B cell (primary cell): ENCODE measurements at regions of chr12 and their contacts with region 1.

Region 1: DNA sequence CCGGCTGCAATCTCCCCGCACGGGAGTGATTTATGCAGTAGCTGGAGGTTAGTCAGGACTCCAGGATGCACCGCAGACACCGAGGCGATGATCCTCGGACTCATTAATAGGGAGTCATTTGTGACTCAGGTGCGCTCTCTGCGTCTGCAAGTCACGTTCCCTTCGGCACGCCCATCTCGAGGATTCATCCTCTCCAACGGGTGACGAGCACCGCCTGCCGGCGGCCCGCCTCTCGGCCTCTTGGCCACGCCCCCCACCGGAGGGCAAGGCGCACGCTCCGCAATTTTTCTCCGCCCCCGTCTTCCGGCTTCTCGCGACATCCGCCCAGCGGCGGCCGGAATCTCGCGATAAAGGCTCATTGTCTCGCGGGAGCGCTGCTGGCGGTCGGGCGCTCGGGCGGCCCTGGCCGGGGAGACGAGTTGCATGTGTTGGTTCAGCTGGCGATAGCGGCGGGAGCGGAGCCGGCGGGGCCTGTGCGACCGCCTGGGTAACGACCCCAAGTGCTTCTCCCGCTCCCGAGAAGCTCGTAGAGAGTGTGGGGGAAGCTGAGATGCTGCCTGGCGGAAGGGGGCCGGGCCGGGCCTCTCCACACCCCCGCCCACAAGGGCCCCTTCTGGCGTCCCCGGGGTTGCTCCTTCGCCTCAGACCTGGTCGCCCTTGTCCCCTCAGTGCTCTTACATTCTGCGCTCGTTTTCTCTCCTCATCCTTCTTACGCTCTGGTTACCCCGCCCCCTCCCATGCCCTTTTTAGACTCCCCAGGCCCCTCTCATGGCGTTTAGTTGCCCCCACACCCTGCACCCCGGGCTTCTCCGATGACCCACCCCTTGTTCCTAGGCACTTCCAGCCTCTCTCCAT is at the start of gene DENR:
- DNase-seq: peak; percentile 99
- ATAC-seq: peak; percentile 94
- H3K4me3 ChIP-seq: peak within 1 kb of the TSS; percentile 60 to 83 (median 78)
- H3K4me3 Mint-ChIP-seq: peak within 1 kb of the TSS; percentile 96
- H3K27ac ChIP-seq: peak within 1 kb of the TSS; percentile 75 to 90
- H3K27ac Mint-ChIP-seq: peak within 1 kb of the TSS; percentile 94
- H3K4me1 ChIP-seq: peaks cover 13 to 23% of the 10 kb centered on the region in 2 donors
- H3K4me1 Mint-ChIP-seq: peaks cover 48% of the 10 kb centered on the region
- H3K27me3 ChIP-seq: no peaks in the 10 kb centered on the region
- H3K27me3 Mint-ChIP-seq: no peaks in the 10 kb centered on the region
- CTCF ChIP-seq: peak; percentile 80
- total RNA-seq, gene DENR: 54.5 and 59.0 TPM in 2 replicates

Region 2: GRCh38 chr12:122336015-122336946 is 416.4 kb before region 1 on chr12:
- CTCF ChIA-PET with region 1: no interaction called
- POLR2A ChIA-PET with region 1: no interaction called
- intact Hi-C with region 1: loop called (anchors 5 kb)
- DNase-seq: peak; percentile 50
- ATAC-seq: no peak
- H3K4me3 ChIP-seq: no peak overlapping the region
- H3K4me3 Mint-ChIP-seq: no peak overlapping the region
- H3K27ac ChIP-seq: peak overlapping the region in 1 of 2 donors; percentile 19
- H3K27ac Mint-ChIP-seq: no peak overlapping the region
- H3K4me1 ChIP-seq: no peaks in the 10 kb centered on the region
- H3K4me1 Mint-ChIP-seq: no peaks in the 10 kb centered on the region
- H3K27me3 ChIP-seq: no peaks in the 10 kb centered on the region
- H3K27me3 Mint-ChIP-seq: no peaks in the 10 kb centered on the region
- CTCF ChIP-seq: peak; percentile 78

Region 3: GRCh38 chr12:122399592-122400373 is 352.9 kb before region 1 on chr12:
- CTCF ChIA-PET with region 1: interaction called, 6 read pairs
- POLR2A ChIA-PET with region 1: no interaction called
- intact Hi-C with region 1: loop called (anchors 1 kb)
- DNase-seq: peak; percentile 77
- ATAC-seq: peak; percentile 66
- H3K4me3 ChIP-seq: peak overlapping the region in 1 of 5 experiments; percentile 6
- H3K4me3 Mint-ChIP-seq: peak overlapping the region; percentile 75
- H3K27ac ChIP-seq: peak overlapping the region in 1 of 2 donors; percentile 38
- H3K27ac Mint-ChIP-seq: peak overlapping the region; percentile 73
- H3K4me1 ChIP-seq: peaks cover 23 to 31% of the 10 kb centered on the region in 2 donors
- H3K4me1 Mint-ChIP-seq: peaks cover 31% of the 10 kb centered on the region
- H3K27me3 ChIP-seq: no peaks in the 10 kb centered on the region
- H3K27me3 Mint-ChIP-seq: no peaks in the 10 kb centered on the region
- CTCF ChIP-seq: peak; percentile 87

Region 4: GRCh38 chr12:122526683-122527477 is 225.8 kb before region 1 on chr12 and contains the starts of genes KNTC1 and RSRC2:
- CTCF ChIA-PET with region 1: interaction called, 3 read pairs
- POLR2A ChIA-PET with region 1: no interaction called
- intact Hi-C with region 1: loop called (anchors 1 kb)
- DNase-seq: peak; percentile 99
- ATAC-seq: peak; percentile 92
- H3K4me3 ChIP-seq: peak within 1 kb of the TSS; percentile 69 to 99 (median 97)
- H3K4me3 Mint-ChIP-seq: no peak within 1 kb of the TSS
- H3K27ac ChIP-seq: peak within 1 kb of the TSS; percentile 90 to 97
- H3K27ac Mint-ChIP-seq: no peak within 1 kb of the TSS
- H3K4me1 ChIP-seq: peaks cover 42% of the 10 kb centered on the region in 2 donors
- H3K4me1 Mint-ChIP-seq: peaks cover 35% of the 10 kb centered on the region
- H3K27me3 ChIP-seq: no peaks in the 10 kb centered on the region
- H3K27me3 Mint-ChIP-seq: no peaks in the 10 kb centered on the region
- CTCF ChIP-seq: no peak
- total RNA-seq, gene KNTC1: 49.0 and 52.4 TPM in 2 replicates
- total RNA-seq, gene RSRC2: 151 and 155 TPM in 2 replicates

Region 5: GRCh38 chr12:122642009-122642408 is 110.7 kb before region 1 on chr12:
- CTCF ChIA-PET with region 1: interaction called, 48 read pairs
- POLR2A ChIA-PET with region 1: no interaction called
- intact Hi-C with region 1: loop called (anchors 1 kb)
- DNase-seq: no peak
- ATAC-seq: no peak
- H3K4me3 ChIP-seq: no peak overlapping the region
- H3K4me3 Mint-ChIP-seq: no peak overlapping the region
- H3K27ac ChIP-seq: no peak overlapping the region
- H3K27ac Mint-ChIP-seq: no peak overlapping the region
- H3K4me1 ChIP-seq: peaks cover 0 to 11% of the 10 kb centered on the region in 2 donors
- H3K4me1 Mint-ChIP-seq: peaks cover 9% of the 10 kb centered on the region
- H3K27me3 ChIP-seq: no peaks in the 10 kb centered on the region
- H3K27me3 Mint-ChIP-seq: no peaks in the 10 kb centered on the region
- CTCF ChIP-seq: no peak